GM12878 (cell line): ENCODE measurements at regions of chr12 and their contacts with region 1.

Region 1: DNA sequence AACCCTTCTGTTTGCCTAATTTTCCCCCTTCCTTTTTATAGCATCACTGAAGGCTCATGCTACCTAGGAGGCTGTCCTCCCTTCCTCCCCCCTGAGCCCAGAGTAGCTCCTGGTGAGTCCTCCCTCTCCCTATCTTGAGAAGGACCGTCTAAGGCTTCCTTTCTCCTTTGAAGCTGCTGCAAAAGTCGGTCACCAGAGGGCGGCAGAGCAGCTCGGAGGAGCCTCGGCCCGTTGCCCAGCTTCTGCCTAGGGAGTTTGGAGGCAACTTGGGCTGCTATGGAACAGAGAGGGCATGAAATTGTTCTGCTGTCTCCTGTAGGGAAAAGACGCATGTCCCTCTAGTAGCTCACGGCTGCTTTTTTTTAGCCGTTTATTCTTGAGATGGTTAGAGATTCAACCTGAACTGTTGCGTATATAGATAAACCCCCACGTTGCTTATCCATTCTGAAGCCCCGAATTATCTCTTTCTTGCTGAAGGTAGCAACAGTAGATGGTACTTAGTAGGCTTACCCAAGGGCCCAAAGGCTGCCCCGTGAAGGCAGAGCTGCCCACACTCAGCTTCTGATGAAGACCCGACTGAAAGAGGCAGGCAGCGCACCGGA is 5.7 kb downstream of the WNT5B start:
- DNase-seq: no peak
- ATAC-seq: peak; percentile 82
- H3K4me3 ChIP-seq: no peak overlapping the region
- H3K27ac ChIP-seq: no peak overlapping the region
- H3K4me1 ChIP-seq: 0 out of 2 replicates have a peak, but pooled peaks cover 6% of the 10 kb centered on the region
- H3K27me3 ChIP-seq: peaks cover 2 to 4% of the 10 kb centered on the region in 2 experiments; a peak in 2 of 4 replicates
- CTCF ChIP-seq: peak; percentile 79 to 83 (median 82)
- EP300 ChIP-seq: no peak
- POLR2A ChIP-seq: no peak
- RAD21 ChIP-seq: peak; percentile 72

Region 2: DNA sequence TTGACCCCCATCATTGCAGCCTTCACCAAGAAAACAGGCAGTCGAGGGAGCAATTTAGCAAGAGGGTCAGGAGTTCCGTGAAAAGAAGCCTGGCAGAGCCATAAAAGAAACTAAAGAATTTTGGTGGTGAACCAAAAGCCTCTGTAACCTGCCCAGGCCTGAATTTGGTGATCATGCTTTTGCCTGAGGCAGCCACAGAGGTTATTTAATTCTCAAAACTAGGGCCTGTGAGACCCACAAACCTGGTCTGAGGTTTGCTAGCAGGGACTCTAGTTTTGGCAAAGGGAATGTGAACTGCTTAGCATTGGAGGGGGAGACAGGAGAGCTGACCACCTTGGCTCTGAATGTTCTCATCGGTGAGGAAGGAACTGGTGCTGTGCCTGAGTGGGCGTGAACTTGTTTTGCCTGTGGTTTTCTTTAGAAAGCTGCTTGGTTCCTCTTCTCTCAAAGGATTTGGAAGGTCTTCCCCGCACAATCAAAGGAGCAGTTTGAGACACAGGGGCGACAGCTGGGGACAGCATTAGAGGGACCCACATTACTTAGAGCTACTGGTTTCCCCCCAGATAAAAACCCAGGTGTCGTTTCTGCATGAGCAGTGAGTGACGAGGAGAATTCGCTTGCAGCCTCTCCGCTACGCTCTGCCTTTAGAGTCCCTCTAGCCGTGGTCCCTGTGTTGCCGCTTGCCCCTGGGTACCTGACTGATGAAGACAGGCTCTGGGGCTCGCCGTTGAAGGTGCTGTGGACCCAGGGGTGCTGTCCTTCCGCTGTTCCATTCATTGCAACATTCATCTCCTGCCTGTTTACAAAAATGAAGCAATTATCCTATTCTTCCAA is 18.2 kb before region 1 on chr12:
- CTCF ChIA-PET with region 1: interaction called, 17 read pairs
- POLR2A ChIA-PET with region 1: interaction called, 4 read pairs
- RAD21 ChIA-PET with region 1: interaction called, 4 read pairs
- SMC1A ChIA-PET with region 1: interaction called, 7 read pairs
- in situ Hi-C with region 1: no loop called
- intact Hi-C with region 1: no loop called
- DNase-seq: no peak
- ATAC-seq: peak; percentile 59
- H3K4me3 ChIP-seq: peak overlapping the region; percentile 27; the same call in 1 of the 2 replicates
- H3K27ac ChIP-seq: no peak overlapping the region
- H3K4me1 ChIP-seq: peaks cover 26% of the 10 kb centered on the region
- H3K27me3 ChIP-seq: no peaks in the 10 kb centered on the region
- CTCF ChIP-seq: no peak
- EP300 ChIP-seq: no peak
- POLR2A ChIP-seq: no peak
- RAD21 ChIP-seq: no peak

Region 3: GRCh38 chr12:1650260-1650977 is 15.7 kb after region 1 on chr12:
- CTCF ChIA-PET with region 1: interaction called, 110 read pairs
- POLR2A ChIA-PET with region 1: no interaction called
- RAD21 ChIA-PET with region 1: interaction called, 8 read pairs
- SMC1A ChIA-PET with region 1: interaction called, 17 read pairs
- in situ Hi-C with region 1: no loop called
- intact Hi-C with region 1: no loop called
- DNase-seq: no peak
- ATAC-seq: no peak
- H3K4me3 ChIP-seq: no peak overlapping the region
- H3K27ac ChIP-seq: no peak overlapping the region
- H3K4me1 ChIP-seq: no peaks in the 10 kb centered on the region
- H3K27me3 ChIP-seq: no peaks in the 10 kb centered on the region
- CTCF ChIP-seq: no peak
- EP300 ChIP-seq: no peak
- POLR2A ChIP-seq: no peak
- RAD21 ChIP-seq: no peak

Region 4: DNA sequence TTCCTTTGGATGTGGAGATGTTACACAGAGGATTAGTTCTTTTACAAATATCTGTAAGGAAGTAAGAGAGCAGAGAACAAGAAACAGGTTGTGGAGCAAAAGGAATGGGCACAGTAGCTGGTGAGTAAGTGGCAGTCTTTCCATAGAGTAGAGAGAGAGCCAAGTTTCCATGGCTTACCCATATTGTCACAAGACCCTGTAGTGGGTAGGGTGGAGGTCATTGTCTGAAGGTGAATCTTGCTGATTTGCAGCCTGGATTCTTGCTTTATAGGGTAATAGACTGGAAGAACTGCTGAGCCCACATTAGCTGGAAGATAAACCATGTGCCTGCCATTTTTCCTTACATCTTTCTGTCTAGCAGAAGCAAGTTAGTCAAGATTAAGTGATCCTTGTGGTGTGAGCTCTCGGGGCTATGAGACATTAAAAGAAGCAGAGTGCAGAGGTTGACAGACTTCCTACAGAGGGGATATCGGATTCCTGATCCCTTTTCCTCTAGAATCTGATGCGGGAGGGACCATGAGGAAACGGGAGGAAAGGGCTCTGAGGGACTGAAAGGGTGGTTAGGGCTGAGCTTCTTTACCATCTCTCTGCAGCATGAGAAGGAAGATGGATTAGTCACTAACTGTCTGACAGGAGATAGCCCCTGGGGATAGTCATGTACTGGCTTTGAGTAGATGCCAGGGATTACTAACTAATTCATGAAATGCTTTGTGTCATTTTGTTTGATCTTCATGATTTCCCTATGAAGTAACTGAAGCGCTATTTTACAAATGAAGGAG is 141.7 kb after region 1 on chr12:
- CTCF ChIA-PET with region 1: interaction called, 11 read pairs
- POLR2A ChIA-PET with region 1: no interaction called
- RAD21 ChIA-PET with region 1: no interaction called
- SMC1A ChIA-PET with region 1: no interaction called
- in situ Hi-C with region 1: no loop called
- intact Hi-C with region 1: no loop called
- DNase-seq: no peak
- ATAC-seq: no peak
- H3K4me3 ChIP-seq: no peak overlapping the region
- H3K27ac ChIP-seq: no peak overlapping the region
- H3K4me1 ChIP-seq: no peaks in the 10 kb centered on the region
- H3K27me3 ChIP-seq: no peaks in the 10 kb centered on the region
- CTCF ChIP-seq: no peak
- EP300 ChIP-seq: no peak
- POLR2A ChIP-seq: no peak
- RAD21 ChIP-seq: no peak

Region 5: GRCh38 chr12:1896964-1897363 is 262.3 kb after region 1 on chr12:
- CTCF ChIA-PET with region 1: no interaction called
- POLR2A ChIA-PET with region 1: no interaction called
- RAD21 ChIA-PET with region 1: no interaction called
- SMC1A ChIA-PET with region 1: no interaction called
- in situ Hi-C with region 1: no loop called
- intact Hi-C with region 1: no loop called
- DNase-seq: no peak
- ATAC-seq: no peak
- H3K4me3 ChIP-seq: no peak overlapping the region
- H3K27ac ChIP-seq: no peak overlapping the region
- H3K4me1 ChIP-seq: no peaks in the 10 kb centered on the region
- H3K27me3 ChIP-seq: no peaks in the 10 kb centered on the region
- CTCF ChIP-seq: no peak
- EP300 ChIP-seq: no peak
- POLR2A ChIP-seq: no peak
- RAD21 ChIP-seq: no peak